AG04449 (cell line): ENCODE measurements at regions of chr18 and their contacts with region 1.

Region 1: GRCh38 chr18:839224-840022 is 27.4 kb upstream of the YES1 start:
- DNase-seq: no peak
- H3K4me3 ChIP-seq: no peak overlapping the region
- CTCF ChIP-seq: peak; percentile 97

Region 2: DNA sequence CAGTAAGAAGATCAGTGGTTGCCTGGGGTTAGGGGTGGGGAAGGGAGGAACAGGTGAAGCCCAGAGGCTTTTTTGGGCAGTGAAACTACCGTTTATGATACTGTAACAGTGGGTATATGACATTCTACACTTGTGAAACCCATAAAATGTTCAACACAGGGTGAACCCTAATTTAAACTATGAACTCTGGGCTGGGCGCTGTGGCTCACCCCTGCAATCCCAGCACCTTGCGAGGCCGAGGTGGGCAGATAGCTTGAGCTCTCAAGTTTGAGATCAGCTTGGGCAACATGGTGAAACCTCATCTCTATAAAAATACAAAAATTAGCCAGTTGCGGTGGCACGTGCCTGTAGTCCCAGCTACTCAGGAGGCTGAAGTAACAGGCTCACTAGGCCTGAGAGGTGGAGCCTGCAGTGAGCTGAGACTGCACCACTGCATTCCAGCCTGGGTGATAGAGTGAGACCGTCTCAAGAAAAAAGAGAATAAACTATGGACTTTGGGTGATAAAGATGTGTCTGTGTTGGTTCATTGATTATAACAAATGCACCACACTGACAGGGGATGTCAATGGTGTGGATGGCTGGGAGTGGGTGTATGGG is 698.7 kb before region 1 on chr18:
- CTCF ChIA-PET with region 1: no interaction called
- POLR2A ChIA-PET with region 1: no interaction called
- DNase-seq: no peak
- H3K4me3 ChIP-seq: no peak overlapping the region
- CTCF ChIP-seq: no peak

Region 3: GRCh38 chr18:457140-457519 is 382.3 kb before region 1 on chr18:
- CTCF ChIA-PET with region 1: no interaction called
- POLR2A ChIA-PET with region 1: no interaction called
- DNase-seq: no peak
- H3K4me3 ChIP-seq: no peak overlapping the region
- CTCF ChIP-seq: no peak

Region 4: GRCh38 chr18:741931-742512 is 97.4 kb before region 1 on chr18:
- CTCF ChIA-PET with region 1: interaction called, 259 read pairs
- POLR2A ChIA-PET with region 1: no interaction called
- DNase-seq: peak; percentile 4
- H3K4me3 ChIP-seq: no peak overlapping the region
- CTCF ChIP-seq: peak; percentile 50

Region 5: DNA sequence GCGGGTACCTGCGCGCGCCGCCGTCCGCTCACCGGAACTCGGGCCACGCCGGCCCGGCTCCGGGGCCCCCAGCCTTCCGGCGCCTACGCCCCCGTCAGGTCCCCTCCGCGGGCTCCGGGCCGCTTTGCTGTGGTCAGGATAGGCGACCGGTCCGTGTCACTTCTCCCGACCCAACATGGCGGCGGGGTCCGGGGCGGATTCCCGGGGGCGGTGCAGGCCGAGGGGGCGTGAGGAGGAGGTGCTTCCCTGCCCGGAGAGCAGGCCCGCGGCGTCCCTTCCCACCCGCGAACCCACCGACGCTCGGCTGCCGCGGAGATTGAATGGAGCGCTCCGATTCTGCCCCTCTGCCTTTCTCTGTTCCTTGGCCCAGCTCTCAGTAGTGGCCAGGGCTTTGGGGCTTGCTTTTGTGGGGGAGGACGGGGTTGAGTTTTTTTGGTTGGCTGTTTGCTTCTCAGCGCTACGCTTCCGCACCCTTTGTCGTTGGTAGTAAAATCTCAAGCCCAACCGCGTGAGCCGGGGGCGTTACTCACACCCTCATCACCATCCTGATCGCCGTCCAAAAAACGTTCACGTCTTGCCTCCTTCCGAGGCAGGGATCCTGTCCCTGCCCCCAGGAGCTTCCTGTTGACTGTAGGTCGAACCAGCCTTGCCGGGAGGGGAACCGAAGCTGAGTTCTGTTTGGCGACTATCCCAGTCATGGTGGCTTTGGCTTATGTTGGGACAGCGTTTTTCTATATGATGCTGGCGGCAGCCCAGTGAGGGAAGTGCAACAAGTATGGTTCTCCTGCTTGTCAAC is 26.8 kb before region 1 on chr18:
- CTCF ChIA-PET with region 1: interaction called, 12 read pairs
- POLR2A ChIA-PET with region 1: no interaction called
- DNase-seq: no peak
- H3K4me3 ChIP-seq: peak overlapping the region; percentile 88
- CTCF ChIP-seq: no peak

Region 6: DNA sequence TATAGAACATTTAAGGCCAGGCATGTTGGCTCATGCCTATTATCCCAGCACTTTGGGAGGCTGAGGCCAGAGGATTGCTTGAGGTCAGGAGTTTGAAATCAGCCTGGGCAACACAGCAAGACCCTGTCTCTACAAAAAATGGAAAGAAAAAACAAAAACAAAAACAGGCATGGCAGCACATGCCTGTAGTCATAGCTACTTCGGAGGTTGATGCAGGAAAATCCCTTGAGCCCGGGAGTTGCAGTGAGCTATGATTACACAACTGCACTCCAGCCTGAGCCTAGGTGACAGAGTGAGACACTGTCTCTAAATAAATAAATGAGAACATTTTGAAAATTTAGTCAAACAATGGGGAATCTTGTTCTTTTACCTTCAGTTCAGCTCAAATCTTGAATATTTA is 15.2 kb before region 1 on chr18:
- CTCF ChIA-PET with region 1: interaction called, 77 read pairs
- POLR2A ChIA-PET with region 1: no interaction called
- DNase-seq: no peak
- H3K4me3 ChIP-seq: no peak overlapping the region
- CTCF ChIP-seq: no peak

Region 7: DNA sequence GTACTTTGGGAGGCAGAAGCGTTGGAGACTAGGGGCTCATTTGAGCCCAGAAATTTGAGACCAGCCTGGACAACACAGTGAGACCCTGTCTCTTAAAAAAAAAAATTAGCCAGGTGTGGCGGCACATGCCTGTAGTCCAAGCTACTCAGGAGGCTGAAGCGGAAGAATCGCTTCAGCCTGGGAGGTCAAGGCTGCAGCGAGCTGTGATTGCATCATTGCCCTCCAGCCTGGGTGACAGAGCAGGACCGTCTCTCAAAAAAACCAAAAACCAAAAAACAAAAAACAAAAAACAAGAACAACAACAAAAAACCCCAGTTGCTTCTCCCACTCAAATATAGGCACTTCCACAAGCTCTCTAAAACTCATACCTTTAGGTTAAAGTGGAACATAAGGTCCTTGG is 37.8 kb after region 1 on chr18:
- CTCF ChIA-PET with region 1: no interaction called
- POLR2A ChIA-PET with region 1: no interaction called
- DNase-seq: no peak
- H3K4me3 ChIP-seq: no peak overlapping the region
- CTCF ChIP-seq: no peak